CD8-positive, alpha-beta memory T cell (primary cell): ENCODE measurements at regions of chr17 and their contacts with region 1.

Region 1: DNA sequence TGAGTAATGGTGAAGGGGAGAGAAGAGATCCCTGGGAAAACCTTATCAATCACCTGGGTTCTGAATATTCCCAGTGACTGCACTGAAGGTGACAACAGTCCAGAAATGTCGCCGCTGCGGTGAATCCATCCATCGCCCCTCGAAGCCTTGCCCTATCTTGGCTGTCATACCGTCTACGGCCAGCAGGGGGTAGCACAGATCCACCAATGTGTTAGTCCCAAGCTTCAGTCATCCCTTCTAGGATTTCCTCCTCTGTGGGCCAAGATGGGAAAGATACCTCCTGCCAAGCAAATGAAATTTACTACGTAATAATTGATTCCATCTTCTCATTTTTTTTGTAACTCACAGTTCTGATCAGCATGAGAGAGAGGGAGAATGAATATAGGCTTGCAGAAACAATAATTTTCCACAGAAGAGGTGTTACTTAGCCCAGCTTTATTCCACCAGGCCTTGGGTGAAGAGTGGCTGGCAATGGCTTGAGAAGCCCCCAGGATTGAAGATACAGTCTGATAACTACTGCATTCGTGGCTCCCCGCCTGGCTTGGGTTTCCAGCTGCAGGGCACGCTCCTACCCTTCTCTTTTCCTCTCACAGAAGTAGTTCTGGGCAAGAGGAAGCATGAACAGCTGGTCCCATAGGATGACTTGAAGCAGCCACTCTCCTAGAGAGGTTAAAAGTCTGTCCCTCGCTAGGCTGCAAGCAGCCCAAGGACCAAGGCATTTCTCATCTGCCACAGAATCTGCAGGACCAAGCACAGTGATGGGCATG is 2.6 kb upstream of the FMNL1 start:
- DNase-seq: peak; percentile 73 to 88 (median 82)
- H3K4me3 ChIP-seq: peak overlapping the region; percentile 24
- H3K4me3 Mint-ChIP-seq: peak overlapping the region; percentile 70 to 93 (median 90)
- H3K27ac ChIP-seq: no peak overlapping the region
- H3K27ac Mint-ChIP-seq: peak overlapping the region; percentile 60 to 97 (median 90)
- H3K4me1 ChIP-seq: peaks cover 24% of the 10 kb centered on the region
- H3K4me1 Mint-ChIP-seq: peaks cover 32 to 46% (median 34%) of the 10 kb centered on the region in 3 donors
- H3K27me3 ChIP-seq: no peaks in the 10 kb centered on the region
- H3K27me3 Mint-ChIP-seq: no peaks in the 10 kb centered on the region

Region 2: DNA sequence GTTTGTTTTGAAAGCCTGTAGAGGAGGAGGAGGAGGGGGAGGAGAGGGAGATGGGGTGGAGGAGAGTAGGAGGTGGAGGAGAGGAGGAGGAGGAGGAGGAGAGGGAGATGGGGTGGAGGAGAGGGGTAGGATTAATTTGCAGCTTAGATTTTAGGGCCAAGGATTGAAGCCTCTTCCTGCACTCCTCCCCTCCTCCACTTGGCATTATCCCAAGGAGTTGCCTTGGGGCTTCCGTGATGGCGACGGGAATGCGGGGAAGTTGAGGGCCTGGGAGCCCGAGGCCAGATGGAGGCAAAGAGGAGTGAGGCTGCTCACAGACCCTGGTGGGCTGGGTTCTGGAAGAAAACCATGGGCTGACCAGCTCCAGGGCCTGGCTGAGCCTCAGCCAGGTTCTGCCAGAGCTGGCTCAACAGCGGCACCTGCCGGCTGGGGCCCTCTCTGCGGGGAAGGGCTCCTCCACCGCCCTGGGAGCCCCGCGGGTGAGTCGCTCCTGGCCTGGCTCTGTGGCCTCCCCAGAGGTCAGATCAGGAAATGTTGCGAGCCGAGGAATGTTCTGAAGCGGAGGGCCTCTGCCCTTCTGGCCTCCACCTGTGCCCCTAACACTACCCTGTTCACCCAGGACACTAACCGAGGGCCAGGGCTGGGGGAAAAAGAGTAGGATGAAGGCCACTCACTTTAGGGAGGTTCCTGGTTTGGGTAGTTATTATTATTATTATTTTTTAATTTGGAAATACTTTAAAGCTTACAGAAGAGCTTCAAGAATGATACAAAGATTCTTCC is 21.3 kb before region 1 on chr17:
- CTCF ChIA-PET with region 1: interaction called, 15 read pairs
- POLR2A ChIA-PET with region 1: no interaction called
- DNase-seq: peak; percentile 74 to 86 (median 83)
- H3K4me3 ChIP-seq: no peak overlapping the region
- H3K4me3 Mint-ChIP-seq: no peak overlapping the region
- H3K27ac ChIP-seq: no peak overlapping the region
- H3K27ac Mint-ChIP-seq: no peak overlapping the region
- H3K4me1 ChIP-seq: no peaks in the 10 kb centered on the region
- H3K4me1 Mint-ChIP-seq: peaks cover 1 to 5% (median 4%) of the 10 kb centered on the region in 3 donors
- H3K27me3 ChIP-seq: no peaks in the 10 kb centered on the region
- H3K27me3 Mint-ChIP-seq: no peaks in the 10 kb centered on the region

Region 3: DNA sequence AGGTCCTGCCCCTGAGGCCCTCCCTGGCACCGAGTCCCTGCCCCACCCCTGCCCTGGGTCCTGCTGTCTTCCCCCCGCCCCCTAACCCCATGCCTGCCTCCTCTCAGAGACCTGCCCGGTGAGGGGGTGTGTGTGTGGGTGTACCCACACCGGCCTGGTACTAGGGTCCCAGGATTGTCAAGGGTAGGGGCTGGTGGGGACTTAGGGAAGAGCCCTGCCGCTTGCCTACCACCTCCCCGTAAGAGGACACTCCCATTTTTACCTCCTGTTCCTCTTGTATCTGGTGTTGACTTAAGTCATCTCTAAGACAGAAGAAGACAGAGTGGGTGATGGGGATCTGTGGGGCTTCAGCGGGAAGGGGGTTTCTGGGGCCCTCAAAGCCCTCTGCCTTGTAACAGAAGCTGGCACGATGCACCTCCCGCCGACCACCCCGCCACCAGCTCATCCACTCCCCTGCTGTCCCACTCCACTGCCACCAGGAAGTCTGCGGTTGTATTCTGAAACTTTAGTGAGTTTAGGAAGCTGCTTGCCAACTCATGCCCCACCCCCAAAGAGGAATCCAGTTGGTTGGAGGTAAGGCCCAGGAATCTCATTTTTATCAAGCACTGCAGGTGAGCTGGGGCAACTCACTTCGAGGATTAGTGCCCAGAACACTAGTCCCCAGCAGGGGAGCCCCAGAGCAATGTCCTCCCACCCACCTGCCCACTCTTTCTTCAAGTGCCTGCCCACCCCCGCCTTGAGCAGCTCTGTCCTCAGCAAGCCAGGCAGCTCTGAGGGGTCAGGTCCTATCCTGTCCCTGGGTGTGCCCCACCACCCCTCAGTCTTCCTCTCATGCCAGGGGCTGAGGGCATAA is 37.3 kb after region 1 on chr17:
- CTCF ChIA-PET with region 1: interaction called, 13 read pairs
- POLR2A ChIA-PET with region 1: no interaction called
- DNase-seq: no peak
- H3K4me3 ChIP-seq: no peak overlapping the region
- H3K4me3 Mint-ChIP-seq: peak overlapping the region in 1 of 7 donors; percentile 64
- H3K27ac ChIP-seq: no peak overlapping the region
- H3K27ac Mint-ChIP-seq: peak overlapping the region in 7 of 8 donors; percentile 23 to 81 (median 61)
- H3K4me1 ChIP-seq: peaks cover 45% of the 10 kb centered on the region
- H3K4me1 Mint-ChIP-seq: peaks cover 31 to 55% (median 45%) of the 10 kb centered on the region in 3 donors
- H3K27me3 ChIP-seq: no peaks in the 10 kb centered on the region
- H3K27me3 Mint-ChIP-seq: no peaks in the 10 kb centered on the region

Region 4: GRCh38 chr17:45277216-45277849 is 58.3 kb after region 1 on chr17:
- CTCF ChIA-PET with region 1: interaction called, 31 read pairs
- POLR2A ChIA-PET with region 1: interaction called, 10 read pairs
- DNase-seq: peak; percentile 76 to 92 (median 83)
- H3K4me3 ChIP-seq: no peak overlapping the region
- H3K4me3 Mint-ChIP-seq: no peak overlapping the region
- H3K27ac ChIP-seq: no peak overlapping the region
- H3K27ac Mint-ChIP-seq: peak overlapping the region in 6 of 8 donors; percentile 0 to 72 (median 38)
- H3K4me1 ChIP-seq: no peaks in the 10 kb centered on the region
- H3K4me1 Mint-ChIP-seq: peaks cover 4 to 16% (median 11%) of the 10 kb centered on the region in 3 donors
- H3K27me3 ChIP-seq: no peaks in the 10 kb centered on the region
- H3K27me3 Mint-ChIP-seq: no peaks in the 10 kb centered on the region

Region 5: GRCh38 chr17:45385331-45385997 is 166.4 kb after region 1 on chr17:
- CTCF ChIA-PET with region 1: interaction called, 79 read pairs
- POLR2A ChIA-PET with region 1: interaction called, 3 read pairs
- DNase-seq: peak; percentile 77 to 91 (median 83)
- H3K4me3 ChIP-seq: no peak overlapping the region
- H3K4me3 Mint-ChIP-seq: no peak overlapping the region
- H3K27ac ChIP-seq: no peak overlapping the region
- H3K27ac Mint-ChIP-seq: no peak overlapping the region
- H3K4me1 ChIP-seq: peaks cover 6% of the 10 kb centered on the region
- H3K4me1 Mint-ChIP-seq: peaks cover 0 to 3% (median 2%) of the 10 kb centered on the region in 3 donors
- H3K27me3 ChIP-seq: no peaks in the 10 kb centered on the region
- H3K27me3 Mint-ChIP-seq: peaks cover 8 to 17% of the 10 kb centered on the region in 2 donors